ENCODE measurements at regions of chr1 and their contacts with region 1.

Region 1: DNA sequence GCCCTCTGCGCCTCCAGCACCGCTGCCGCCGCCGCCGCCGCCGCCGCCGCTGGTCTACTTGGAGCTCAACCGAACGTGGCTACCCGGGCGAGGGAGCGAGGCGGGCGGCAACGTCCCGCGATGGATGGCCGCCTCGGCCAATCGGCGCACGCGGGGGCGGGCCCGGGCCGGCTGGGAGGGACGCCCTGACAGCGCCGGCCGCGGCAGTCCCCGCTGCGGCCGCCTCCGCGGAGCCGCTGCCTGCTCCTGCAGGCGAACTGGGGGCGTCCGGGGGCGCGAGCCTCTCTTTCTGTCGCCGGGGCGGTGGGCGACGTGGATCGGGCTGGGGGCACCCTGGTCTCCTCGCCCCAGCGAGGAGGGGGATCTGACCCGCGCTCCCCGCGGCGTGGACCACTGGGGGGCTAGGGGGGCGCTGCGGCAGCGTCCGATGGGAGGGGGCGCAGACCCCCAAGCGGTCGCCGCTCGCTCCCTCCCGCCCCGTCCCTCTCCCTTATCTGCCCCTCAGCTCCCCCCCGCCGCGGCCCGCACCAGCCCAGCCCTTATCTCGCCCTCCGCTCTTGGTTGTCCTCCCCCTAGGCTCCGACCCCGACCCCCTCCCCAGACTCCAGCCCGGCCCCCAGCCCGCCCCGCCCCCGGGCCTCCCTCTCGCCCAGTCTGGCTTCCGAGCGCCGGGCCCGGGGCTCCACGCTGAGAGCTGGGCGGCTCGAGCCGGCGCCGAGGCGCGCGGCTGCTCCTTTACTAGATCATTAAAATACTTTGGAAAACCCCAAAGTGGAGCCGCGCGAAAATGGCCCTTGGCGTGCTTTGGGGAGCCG is at the start of gene SSBP3:
- DNase-seq: peak; percentile 95
- H3K4me3 ChIP-seq: peak within 1 kb of the TSS; percentile 88 to 99 (median 97)
- H3K27ac ChIP-seq: peak within 1 kb of the TSS; percentile 93 to 99 (median 98)
- H3K4me1 ChIP-seq: peaks cover 32 to 64% (median 56%) of the 10 kb centered on the region in 4 donors
- H3K27me3 ChIP-seq: no peaks in the 10 kb centered on the region
- CTCF ChIP-seq: peak in 2 of 3 experiments; percentile 13 to 14
- EP300 ChIP-seq: no peak
- POLR2A ChIP-seq: peak; percentile 56
- total RNA-seq, gene SSBP3: 32.8 to 63.4 (median 47.4) TPM

Region 2: DNA sequence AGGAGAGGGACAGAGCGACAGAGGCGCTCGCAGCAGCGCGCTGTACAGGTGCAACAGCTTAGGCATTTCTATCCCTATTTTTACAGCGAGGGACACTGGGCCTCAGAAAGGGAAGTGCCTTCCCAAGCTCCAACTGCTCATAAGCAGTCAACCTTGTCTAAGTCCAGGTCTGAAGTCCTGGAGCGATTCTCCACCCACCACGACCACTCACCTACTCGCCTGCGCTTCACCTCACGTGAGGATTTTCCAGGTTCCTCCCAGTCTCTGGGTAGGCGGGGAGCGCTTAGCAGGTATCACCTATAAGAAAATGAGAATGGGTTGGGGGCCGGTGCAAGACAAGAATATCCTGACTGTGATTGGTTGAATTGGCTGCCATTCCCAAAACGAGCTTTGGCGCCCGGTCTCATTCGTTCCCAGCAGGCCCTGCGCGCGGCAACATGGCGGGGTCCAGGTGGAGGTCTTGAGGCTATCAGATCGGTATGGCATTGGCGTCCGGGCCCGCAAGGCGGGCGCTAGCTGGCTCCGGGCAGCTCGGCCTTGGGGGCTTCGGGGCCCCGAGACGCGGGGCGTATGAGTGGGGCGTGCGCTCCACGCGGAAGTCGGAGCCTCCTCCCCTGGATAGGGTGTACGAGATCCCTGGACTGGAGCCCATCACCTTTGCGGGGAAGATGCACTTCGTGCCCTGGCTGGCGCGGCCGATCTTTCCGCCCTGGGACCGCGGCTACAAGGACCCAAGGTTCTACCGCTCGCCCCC is 206.6 kb before region 1 on chr1 and contains the starts of genes CYB5RL and MRPL37:
- intact Hi-C with region 1: loop called (anchors 5 kb)
- DNase-seq: peak; percentile 98
- H3K4me3 ChIP-seq: peak within 1 kb of the TSS; percentile 78 to 86 (median 84)
- H3K27ac ChIP-seq: peak within 1 kb of the TSS; percentile 81 to 85 (median 81)
- H3K4me1 ChIP-seq: peaks cover 14 to 33% (median 29%) of the 10 kb centered on the region in 4 donors
- H3K27me3 ChIP-seq: no peaks in the 10 kb centered on the region
- CTCF ChIP-seq: no peak
- EP300 ChIP-seq: no peak
- POLR2A ChIP-seq: no peak
- total RNA-seq, gene CYB5RL: 3.6 to 6.1 (median 3.9) TPM
- total RNA-seq, gene MRPL37: 54.2 to 62.1 (median 58.4) TPM

Region 3: GRCh38 chr1:54273092-54273794 is 133.3 kb before region 1 on chr1:
- intact Hi-C with region 1: loop called (anchors 2 kb)
- DNase-seq: peak; percentile 94
- H3K4me3 ChIP-seq: peak overlapping the region; percentile 23 to 43 (median 34)
- H3K27ac ChIP-seq: peak overlapping the region; percentile 90 to 97 (median 95)
- H3K4me1 ChIP-seq: peaks cover 77 to 99% (median 95%) of the 10 kb centered on the region in 4 donors
- H3K27me3 ChIP-seq: no peaks in the 10 kb centered on the region
- CTCF ChIP-seq: peak in 2 of 3 experiments; percentile 78
- EP300 ChIP-seq: peak; percentile 56
- POLR2A ChIP-seq: no peak

Region 4: DNA sequence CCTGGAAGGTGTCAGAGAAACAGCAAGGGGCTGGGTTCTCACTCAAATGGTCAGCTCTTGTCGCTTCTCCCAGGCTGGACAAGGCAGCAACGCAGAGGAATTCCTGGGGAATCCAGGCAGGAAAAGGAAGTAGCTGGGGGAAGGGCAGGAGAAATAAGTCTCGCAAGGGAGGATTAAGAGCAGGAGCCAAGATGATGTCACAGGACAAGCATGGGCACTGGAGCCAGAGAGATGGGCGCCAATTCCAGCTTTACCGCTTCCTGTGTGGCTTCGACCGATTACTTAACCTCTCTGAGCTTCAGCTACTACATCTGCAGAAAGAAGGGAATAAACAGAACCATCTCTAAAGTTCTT is 70.8 kb before region 1 on chr1:
- intact Hi-C with region 1: loop called (anchors 10 kb)
- DNase-seq: peak; percentile 94
- H3K4me3 ChIP-seq: peak overlapping the region; percentile 25 to 44 (median 33)
- H3K27ac ChIP-seq: peak overlapping the region; percentile 86 to 91 (median 88)
- H3K4me1 ChIP-seq: peaks cover 92 to 97% (median 97%) of the 10 kb centered on the region in 4 donors
- H3K27me3 ChIP-seq: no peaks in the 10 kb centered on the region
- CTCF ChIP-seq: no peak
- EP300 ChIP-seq: no peak
- POLR2A ChIP-seq: no peak